ENCODE measurements at regions of chr17 and their contacts with region 1.

Region 1: GRCh38 chr17:46139432-46140210 is 53.6 kb downstream of the KANSL1 start:
- DNase-seq: no peak
- ATAC-seq: peak; percentile 47
- H3K4me3 Mint-ChIP-seq: peak overlapping the region; percentile 7
- H3K27ac Mint-ChIP-seq: peak overlapping the region; percentile 47
- H3K4me1 Mint-ChIP-seq: peaks cover 93% of the 10 kb centered on the region
- H3K27me3 Mint-ChIP-seq: no peaks in the 10 kb centered on the region
- CTCF ChIP-seq: no peak

Region 2: DNA sequence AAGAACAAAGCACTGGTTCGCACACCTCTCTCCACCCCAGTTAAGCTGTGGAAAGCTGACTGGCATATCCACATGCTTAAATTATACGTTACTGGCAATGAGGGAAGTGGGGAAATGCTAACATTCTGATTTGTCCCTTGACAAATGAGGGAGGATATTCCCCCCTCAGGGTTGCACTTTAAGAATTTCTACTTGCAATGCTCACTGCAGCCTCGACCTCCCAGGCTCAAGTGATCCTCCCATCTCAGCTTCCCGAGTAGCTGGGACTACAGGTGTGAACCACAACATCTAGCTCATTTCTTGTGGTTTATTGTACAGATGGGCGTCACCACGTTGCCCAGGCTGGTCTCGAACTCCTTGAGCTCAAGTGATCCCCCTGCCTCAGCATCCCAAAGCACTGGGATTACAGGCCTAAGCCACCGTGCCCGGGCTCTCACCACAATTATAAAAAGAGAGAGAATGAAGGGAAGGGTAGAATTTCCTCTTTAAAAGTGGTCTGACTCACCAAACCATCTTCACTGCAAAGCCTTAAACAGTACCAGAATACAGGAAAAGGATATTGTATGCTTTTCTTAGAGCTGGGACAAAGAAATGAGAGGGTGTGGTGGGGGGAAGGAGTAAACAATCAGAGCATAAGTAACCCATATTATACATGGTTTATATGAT is 14.7 kb after region 1 on chr17:
- CTCF ChIA-PET with region 1: no interaction called
- POLR2A ChIA-PET with region 1: interaction called, 9 read pairs
- intact Hi-C with region 1: loop called (anchors 2 kb)
- DNase-seq: no peak
- ATAC-seq: no peak
- H3K4me3 Mint-ChIP-seq: peak overlapping the region; percentile 16
- H3K27ac Mint-ChIP-seq: peak overlapping the region; percentile 43
- H3K4me1 Mint-ChIP-seq: peaks cover 88% of the 10 kb centered on the region
- H3K27me3 Mint-ChIP-seq: no peaks in the 10 kb centered on the region
- CTCF ChIP-seq: no peak

Region 3: GRCh38 chr17:46199379-46199778 is 59.8 kb after region 1 on chr17:
- CTCF ChIA-PET with region 1: no interaction called
- POLR2A ChIA-PET with region 1: no interaction called
- intact Hi-C with region 1: no loop called
- DNase-seq: no peak
- ATAC-seq: no peak
- H3K4me3 Mint-ChIP-seq: no peak overlapping the region
- H3K27ac Mint-ChIP-seq: no peak overlapping the region
- H3K4me1 Mint-ChIP-seq: peaks cover 32% of the 10 kb centered on the region
- H3K27me3 Mint-ChIP-seq: no peaks in the 10 kb centered on the region
- CTCF ChIP-seq: no peak

Region 4: DNA sequence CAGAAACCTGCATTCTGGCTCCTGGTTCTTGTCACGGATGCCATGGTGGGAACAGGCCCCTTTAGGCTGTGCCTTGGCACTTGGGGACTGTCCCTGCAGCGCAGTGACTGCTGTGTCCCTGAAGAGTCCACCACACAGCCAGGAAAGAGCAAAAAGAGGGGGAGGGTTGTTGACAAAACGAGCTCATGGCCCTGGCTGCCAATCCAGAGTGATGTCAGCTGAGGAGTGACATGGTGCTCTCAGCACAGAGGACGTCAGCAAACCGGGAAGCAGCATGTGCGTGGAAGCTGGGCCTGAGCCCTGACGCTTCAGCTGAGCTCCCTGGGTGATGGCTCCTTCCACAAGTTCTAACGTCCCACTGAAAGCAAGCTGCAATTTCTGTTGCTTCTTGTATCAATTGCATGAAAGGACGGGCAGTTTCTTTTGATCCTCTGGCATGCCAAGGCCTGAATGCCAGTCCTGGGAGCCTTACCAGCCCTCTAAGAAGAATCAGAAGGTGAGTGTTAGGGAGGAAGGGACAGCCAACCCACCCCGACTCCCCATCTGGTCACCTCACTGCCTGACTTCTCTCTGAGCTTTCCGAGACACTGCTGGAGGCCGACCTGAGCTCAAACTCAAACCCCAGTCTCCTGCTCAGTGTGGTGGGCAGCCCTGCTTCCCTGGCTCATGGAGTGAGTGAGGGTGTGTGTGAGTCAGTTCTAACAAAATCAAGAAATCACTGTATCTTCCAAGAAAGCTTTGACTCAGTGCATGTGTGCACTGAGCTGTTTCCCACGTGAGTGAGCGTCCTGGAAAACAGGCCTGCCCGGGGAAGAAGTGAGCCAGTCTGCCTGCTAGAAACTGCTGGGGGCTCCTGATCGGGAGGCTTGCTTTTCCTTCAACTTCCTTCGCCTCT is 693.6 kb after region 1 on chr17:
- CTCF ChIA-PET with region 1: no interaction called
- POLR2A ChIA-PET with region 1: no interaction called
- intact Hi-C with region 1: loop called (anchors 10 kb)
- DNase-seq: no peak
- ATAC-seq: no peak
- H3K4me3 Mint-ChIP-seq: no peak overlapping the region
- H3K27ac Mint-ChIP-seq: no peak overlapping the region
- H3K4me1 Mint-ChIP-seq: peaks cover 3% of the 10 kb centered on the region
- H3K27me3 Mint-ChIP-seq: peaks cover 15% of the 10 kb centered on the region
- CTCF ChIP-seq: no peak

Region 5: DNA sequence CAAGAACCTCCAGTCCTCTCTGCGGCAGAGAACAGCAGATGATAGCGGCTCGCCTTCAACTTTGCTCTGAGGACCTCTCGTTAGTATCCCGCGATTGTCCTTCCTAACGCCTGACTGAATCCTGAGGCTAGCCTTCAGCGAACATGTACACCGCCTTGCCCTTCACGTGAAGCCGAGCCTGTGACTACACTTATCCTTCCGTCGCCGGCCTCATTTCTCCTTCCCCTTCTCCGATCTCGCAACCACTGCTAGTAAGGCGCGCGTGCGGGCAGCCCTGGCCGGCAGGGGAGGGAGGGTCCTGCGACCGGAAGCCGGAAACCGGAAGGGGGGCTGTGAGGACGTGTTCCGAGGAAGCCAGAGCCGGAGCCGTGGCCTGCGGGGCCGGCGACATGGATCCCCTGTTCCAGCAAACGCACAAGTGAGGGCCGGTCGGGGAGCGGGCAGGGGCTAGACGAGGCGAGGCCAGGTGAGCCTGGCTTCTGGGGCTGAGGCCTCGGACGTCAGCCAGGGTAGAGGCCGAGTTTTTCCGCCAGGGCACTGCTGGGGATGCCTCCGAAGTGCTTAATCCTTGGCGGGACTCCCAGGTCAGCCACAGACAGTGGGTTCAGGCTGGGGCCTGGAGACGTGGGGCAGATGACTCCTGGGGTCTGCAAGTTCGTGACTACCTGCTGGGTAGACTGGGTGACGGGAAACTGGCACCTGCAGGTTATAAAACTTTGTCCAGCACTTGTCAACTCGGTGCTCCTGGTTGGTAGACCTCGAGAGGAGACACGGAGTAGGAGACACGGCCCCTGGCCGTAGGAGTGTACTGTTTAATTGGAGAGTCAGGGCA is 783.4 kb after region 1 on chr17 and contains the start of gene GOSR2:
- CTCF ChIA-PET with region 1: no interaction called
- POLR2A ChIA-PET with region 1: no interaction called
- intact Hi-C with region 1: loop called (anchors 5 kb)
- DNase-seq: peak; percentile 93
- ATAC-seq: peak; percentile 95
- H3K4me3 Mint-ChIP-seq: peak within 1 kb of the TSS; percentile 91
- H3K27ac Mint-ChIP-seq: peak within 1 kb of the TSS; percentile 100
- H3K4me1 Mint-ChIP-seq: peaks cover 49% of the 10 kb centered on the region
- H3K27me3 Mint-ChIP-seq: peaks cover 2% of the 10 kb centered on the region
- CTCF ChIP-seq: no peak
- total RNA-seq, gene GOSR2: 64.7 and 78.0 TPM in 2 replicates